CD4-positive, alpha-beta memory T cell (primary cell): ENCODE measurements at regions of chr11 and their contacts with region 1.

Region 1: GRCh38 chr11:119323538-119324033 is 6.7 kb upstream of the MCAM start:
- DNase-seq: peak; percentile 69 to 80 (median 74)
- H3K4me3 ChIP-seq: no peak overlapping the region
- H3K4me3 Mint-ChIP-seq: peak overlapping the region in 4 of 8 donors; percentile 15 to 68 (median 40)
- H3K27ac ChIP-seq: no peak overlapping the region
- H3K27ac Mint-ChIP-seq: peak overlapping the region in 3 of 7 donors; percentile 38 to 82 (median 47)
- H3K4me1 ChIP-seq: peaks cover 40% of the 10 kb centered on the region
- H3K4me1 Mint-ChIP-seq: peaks cover 15 to 34% (median 24%) of the 10 kb centered on the region in 4 donors
- H3K27me3 ChIP-seq: no peaks in the 10 kb centered on the region
- H3K27me3 Mint-ChIP-seq: peaks cover 0 to 5% of the 10 kb centered on the region in 2 donors

Region 2: DNA sequence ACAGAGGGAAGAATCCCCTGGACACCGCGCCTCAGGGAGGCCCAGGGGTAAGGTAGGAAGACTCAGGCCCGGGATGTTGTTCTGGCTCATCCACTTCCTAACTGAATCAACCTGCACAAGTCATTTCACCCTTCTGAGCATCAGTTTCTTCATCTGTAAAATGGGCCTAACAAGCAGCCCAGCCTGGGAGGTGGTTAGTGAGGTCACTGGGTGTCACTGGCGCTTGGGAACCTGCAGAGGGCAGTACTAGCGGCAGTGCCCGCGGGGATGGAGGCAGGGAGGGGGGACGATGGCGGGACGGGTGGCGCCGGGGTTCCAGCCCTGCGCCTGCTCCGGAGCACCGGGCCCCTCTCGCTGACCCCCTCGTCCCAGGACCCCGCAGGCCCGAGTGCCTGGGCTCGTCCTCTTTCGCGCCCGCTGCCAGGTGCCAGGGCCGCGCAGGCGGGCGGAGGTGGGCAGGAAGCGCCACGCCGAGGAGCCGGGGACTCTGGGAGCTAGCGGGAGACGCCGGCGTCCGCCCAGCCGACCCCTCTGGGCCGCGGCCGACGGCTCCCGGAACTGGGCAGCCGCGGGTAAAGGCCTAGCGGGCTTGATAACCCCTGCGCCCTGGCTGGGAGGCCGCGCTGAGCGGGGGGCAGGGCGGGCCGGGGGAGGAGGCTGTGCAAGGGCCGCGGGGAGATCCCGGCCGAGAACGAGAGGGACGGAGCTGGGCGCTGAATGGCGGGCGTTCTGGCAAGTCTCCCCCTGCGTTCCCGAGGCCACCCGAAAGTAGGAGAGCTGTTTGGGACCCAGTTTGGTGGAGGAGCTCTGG is 154.9 kb before region 1 on chr11 and contains the start of gene NLRX1:
- CTCF ChIA-PET with region 1: interaction called, 11 read pairs
- POLR2A ChIA-PET with region 1: interaction called, 5 read pairs
- intact Hi-C with region 1: loop called (anchors 1 kb)
- DNase-seq: peak; percentile 81 to 83 (median 82)
- H3K4me3 ChIP-seq: peak within 1 kb of the TSS; percentile 78 to 79
- H3K4me3 Mint-ChIP-seq: peak within 1 kb of the TSS; percentile 89 to 91 (median 90)
- H3K27ac ChIP-seq: peak within 1 kb of the TSS; percentile 67
- H3K27ac Mint-ChIP-seq: peak within 1 kb of the TSS; percentile 68 to 90 (median 89)
- H3K4me1 ChIP-seq: peaks cover 6% of the 10 kb centered on the region
- H3K4me1 Mint-ChIP-seq: peaks cover 1 to 10% (median 8%) of the 10 kb centered on the region in 4 donors
- H3K27me3 ChIP-seq: no peaks in the 10 kb centered on the region
- H3K27me3 Mint-ChIP-seq: no peaks in the 10 kb centered on the region
- total RNA-seq, gene NLRX1: 8.8 to 9.2 TPM

Region 3: DNA sequence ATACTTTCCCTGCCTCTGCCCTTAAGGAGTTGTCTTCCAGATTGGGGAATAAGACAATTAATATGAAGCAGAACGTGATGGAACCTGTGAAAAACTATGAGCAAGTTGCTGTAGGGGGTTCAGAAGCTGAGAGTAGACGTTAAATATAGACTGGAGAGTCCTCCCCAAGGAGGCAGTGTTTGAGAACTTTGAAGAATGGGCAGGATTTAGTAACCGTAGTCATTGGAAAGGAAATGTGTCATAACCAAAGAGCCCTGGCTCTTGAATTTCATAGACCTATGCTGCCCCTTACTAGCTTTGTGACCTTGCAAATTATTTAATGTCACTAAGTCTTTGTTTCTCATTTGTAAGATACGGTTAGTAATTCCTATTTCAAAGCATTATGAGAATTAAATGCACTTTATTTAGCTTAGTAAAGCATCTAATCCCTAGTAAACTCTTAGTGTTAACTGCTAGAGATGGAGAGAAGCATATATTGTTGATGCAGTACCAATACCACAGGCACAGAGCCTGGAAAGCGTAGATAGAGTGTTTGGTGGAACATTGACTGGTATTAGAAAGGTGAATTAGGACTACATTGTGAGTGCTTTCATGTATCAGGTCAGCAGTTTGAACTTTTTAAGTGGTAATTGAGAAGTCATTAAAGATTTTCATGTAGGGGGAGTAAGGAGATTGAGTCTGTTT is 60.8 kb before region 1 on chr11:
- CTCF ChIA-PET with region 1: interaction called, 14 read pairs
- POLR2A ChIA-PET with region 1: interaction called, 3 read pairs
- intact Hi-C with region 1: no loop called
- DNase-seq: peak in 2 of 5 donors; percentile 9 to 21
- H3K4me3 ChIP-seq: peak overlapping the region in 1 of 2 donors; percentile 5
- H3K4me3 Mint-ChIP-seq: no peak overlapping the region
- H3K27ac ChIP-seq: peak overlapping the region; percentile 39
- H3K27ac Mint-ChIP-seq: no peak overlapping the region
- H3K4me1 ChIP-seq: peaks cover 94% of the 10 kb centered on the region
- H3K4me1 Mint-ChIP-seq: peaks cover 44 to 60% (median 49%) of the 10 kb centered on the region in 4 donors
- H3K27me3 ChIP-seq: no peaks in the 10 kb centered on the region
- H3K27me3 Mint-ChIP-seq: no peaks in the 10 kb centered on the region

Region 4: DNA sequence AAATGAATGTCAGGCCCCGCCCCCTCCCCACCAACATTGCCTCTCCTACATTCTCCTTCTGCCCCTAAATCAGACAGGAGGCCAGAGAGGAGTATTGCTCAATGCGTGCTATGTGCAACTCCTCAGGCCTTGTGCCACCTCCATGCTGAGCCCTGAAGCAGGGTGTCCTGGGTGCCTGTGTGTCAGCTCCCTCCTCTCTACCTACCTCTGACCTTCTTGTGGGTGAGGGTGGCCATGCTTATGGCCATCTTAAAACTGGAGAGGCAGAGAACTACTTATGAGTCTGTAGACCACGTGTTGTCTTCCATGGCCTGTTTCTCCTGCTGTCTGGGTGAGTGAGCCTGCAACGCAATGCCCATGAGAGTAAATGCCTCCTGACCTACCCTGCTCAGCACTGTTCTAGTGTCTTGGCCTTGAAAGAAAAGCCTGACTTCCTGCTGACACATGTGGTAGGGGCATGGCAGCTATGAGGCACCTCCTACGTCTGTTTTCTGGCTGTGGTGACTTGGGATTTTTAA is 17.2 kb before region 1 on chr11:
- CTCF ChIA-PET with region 1: interaction called, 86 read pairs
- POLR2A ChIA-PET with region 1: interaction called, 3 read pairs
- intact Hi-C with region 1: no loop called
- DNase-seq: peak in 2 of 5 donors; percentile 31 to 41
- H3K4me3 ChIP-seq: no peak overlapping the region
- H3K4me3 Mint-ChIP-seq: peak overlapping the region in 6 of 8 donors; percentile 13 to 68 (median 50)
- H3K27ac ChIP-seq: no peak overlapping the region
- H3K27ac Mint-ChIP-seq: peak overlapping the region; percentile 78 to 94 (median 87)
- H3K4me1 ChIP-seq: peaks cover 26% of the 10 kb centered on the region
- H3K4me1 Mint-ChIP-seq: peaks cover 12 to 25% (median 17%) of the 10 kb centered on the region in 4 donors
- H3K27me3 ChIP-seq: no peaks in the 10 kb centered on the region
- H3K27me3 Mint-ChIP-seq: no peaks in the 10 kb centered on the region

Region 5: DNA sequence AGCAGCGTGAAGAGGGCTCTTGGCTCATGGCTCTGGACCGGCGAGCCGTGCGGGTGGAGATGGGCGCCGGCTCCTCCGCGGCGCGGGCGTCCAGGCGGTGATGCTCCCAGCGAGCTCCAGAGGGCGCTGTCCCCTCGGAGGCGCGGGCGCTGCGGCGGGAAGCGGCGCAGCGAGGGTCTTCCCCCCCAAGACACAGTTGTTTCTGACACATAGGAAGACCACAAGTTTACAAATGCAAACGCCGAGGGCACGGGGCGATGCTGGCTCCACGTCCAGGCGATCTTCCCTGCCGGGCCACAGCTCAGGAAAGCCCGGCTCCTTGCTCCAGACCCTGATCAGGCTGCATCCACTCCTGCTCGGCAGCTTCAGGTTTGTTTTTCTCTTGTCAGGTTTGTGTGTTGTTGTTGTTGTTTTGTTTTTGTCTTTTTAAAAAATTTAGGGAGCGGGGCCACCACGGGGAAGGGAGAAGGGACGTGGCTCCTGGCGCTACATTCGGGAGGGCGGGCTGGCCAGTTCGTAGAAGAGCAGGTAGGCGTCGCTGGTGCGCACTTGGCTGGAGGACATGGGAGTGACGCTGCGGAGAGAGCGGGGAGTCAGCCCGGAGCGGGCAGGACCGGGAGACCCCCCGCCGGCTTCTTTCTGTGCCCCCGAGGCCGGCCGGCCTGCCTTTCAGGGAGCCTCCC is 32.9 kb after region 1 on chr11:
- CTCF ChIA-PET with region 1: interaction called, 14 read pairs
- POLR2A ChIA-PET with region 1: no interaction called
- intact Hi-C with region 1: no loop called
- DNase-seq: peak; percentile 69 to 75 (median 72)
- H3K4me3 ChIP-seq: peak overlapping the region; percentile 59 to 78
- H3K4me3 Mint-ChIP-seq: peak overlapping the region; percentile 86 to 95 (median 91)
- H3K27ac ChIP-seq: peak overlapping the region; percentile 23
- H3K27ac Mint-ChIP-seq: peak overlapping the region in 6 of 7 donors; percentile 75 to 94 (median 92)
- H3K4me1 ChIP-seq: peaks cover 5% of the 10 kb centered on the region
- H3K4me1 Mint-ChIP-seq: peaks cover 3 to 11% (median 6%) of the 10 kb centered on the region in 4 donors
- H3K27me3 ChIP-seq: no peaks in the 10 kb centered on the region
- H3K27me3 Mint-ChIP-seq: peaks cover 7 to 8% of the 10 kb centered on the region in 2 donors